Dorsolateral prefrontal cortex (tissue), 120 donors: ENCODE measurements at regions of chr10 and their contacts with region 1.

Region 1: DNA sequence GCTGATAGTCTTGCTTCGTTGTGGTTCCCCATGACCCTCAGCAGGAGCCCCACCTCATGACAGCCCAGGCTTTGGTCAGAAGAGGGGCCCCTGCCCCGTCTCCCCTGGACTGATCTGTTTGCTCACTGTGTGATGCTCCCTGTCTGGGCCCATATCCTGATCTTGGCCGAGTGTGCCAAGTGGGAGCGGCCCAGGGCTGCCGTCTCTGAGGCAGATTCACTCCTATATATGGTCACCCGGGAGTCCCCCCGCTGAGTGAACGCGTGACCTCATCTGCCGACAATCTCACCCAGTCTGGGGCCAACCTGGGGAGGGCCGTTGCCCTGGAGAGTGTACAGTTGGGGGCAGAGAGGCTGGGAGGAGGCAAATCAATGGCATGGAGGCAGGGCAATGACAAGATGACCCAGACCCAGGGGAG is 34.5 kb downstream of the PPIF start:
- DNase-seq: peak in 4 of 10 donors; percentile 60 to 68 (median 66)
- H3K4me3 ChIP-seq: no peak overlapping the region
- H3K27ac ChIP-seq: peak overlapping the region in 55 of 59 donors; percentile 6 to 89 (median 70)
- H3K27me3 ChIP-seq: no peaks in the 10 kb centered on the region
- CTCF ChIP-seq: no peak

Region 2: GRCh38 chr10:79463578-79464496 is 82.0 kb after region 1 on chr10:
- intact Hi-C with region 1: loop called in 1 of 2 experiments (anchors 2 kb)
- DNase-seq: no peak
- H3K4me3 ChIP-seq: no peak overlapping the region
- H3K27ac ChIP-seq: no peak overlapping the region
- H3K27me3 ChIP-seq: no peaks in the 10 kb centered on the region
- CTCF ChIP-seq: no peak